Posterior cingulate gyrus (tissue), 11 donors: ENCODE measurements at regions of chrX and their contacts with region 1.

Region 1: GRCh38 chrX:25144043-25144940 is 128.5 kb upstream of the ARX start:
- DNase-seq: peak; percentile 18 to 89 (median 60)

Region 2: GRCh38 chrX:24395775-24396174 is 748.5 kb before region 1 on chrX:
- intact Hi-C with region 1: loop called (anchors 10 kb)
- DNase-seq: peak in 2 of 10 donors; percentile 8 to 13

Region 3: GRCh38 chrX:24515447-24515846 is 628.8 kb before region 1 on chrX:
- intact Hi-C with region 1: loop called (anchors 10 kb)
- DNase-seq: peak in 2 of 10 donors; percentile 8 to 14

Region 4: DNA sequence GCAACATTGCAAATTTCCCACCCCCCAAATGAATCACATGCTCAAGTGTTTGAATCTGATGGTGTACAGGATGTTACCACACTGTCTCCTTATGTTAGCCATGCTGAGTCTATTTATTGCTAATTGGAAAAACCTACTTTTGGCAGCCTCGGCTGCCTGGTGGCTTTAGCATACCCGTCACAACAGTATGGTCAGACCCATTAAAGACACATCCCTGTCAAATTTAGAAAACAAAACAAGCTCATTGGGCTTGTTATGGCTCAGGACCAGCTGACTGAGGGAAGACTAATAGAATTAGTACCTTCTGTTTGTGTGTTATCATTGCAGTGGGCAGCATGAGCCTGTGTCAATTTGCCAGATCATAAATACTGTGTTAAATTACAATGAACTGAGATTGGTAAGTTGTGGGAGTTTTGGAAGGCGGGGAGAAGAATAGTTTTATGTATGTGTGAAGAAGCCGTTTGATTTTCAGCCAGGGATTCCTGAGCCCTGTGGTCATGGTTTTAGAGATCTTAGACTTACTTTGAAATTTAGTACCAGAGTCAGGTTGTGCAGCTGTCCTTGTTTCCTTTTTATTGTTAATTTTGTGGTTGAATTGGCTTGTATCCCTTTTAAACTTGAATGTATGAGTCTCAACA is 383.8 kb before region 1 on chrX:
- intact Hi-C with region 1: loop called (anchors 2 kb)
- DNase-seq: no peak

Region 5: DNA sequence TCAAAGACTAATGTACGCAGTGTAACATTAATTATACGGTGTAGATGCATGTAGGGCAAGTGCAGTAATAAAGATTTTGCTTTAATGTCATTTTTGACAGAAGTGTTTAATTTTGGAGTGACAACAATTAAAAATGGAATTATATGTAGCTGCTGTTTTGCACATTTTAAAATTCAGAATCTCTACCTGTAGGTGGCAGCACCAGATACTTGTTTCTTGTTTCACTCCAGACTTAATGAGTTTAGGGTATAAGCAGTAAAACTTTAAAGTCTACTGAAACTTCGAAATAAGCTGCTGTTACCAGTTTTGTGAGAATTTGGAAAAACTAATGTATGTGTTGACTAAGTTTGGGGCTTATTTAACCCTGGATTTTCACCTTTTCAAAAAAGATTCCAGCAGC is 305.7 kb before region 1 on chrX:
- intact Hi-C with region 1: loop called (anchors 5 kb)
- DNase-seq: no peak

Region 6: GRCh38 chrX:25034889-25035288 is 109.4 kb before region 1 on chrX:
- intact Hi-C with region 1: loop called (anchors 10 kb)
- DNase-seq: no peak